ENCODE measurements at regions of chr12 and their contacts with region 1.

Region 1: GRCh38 chr12:94145191-94145983 is 3.0 kb upstream of the PLXNC1 start:
- DNase-seq: no peak
- H3K4me3 Mint-ChIP-seq: no peak overlapping the region
- H3K27ac Mint-ChIP-seq: no peak overlapping the region
- H3K4me1 Mint-ChIP-seq: peaks cover 17% of the 10 kb centered on the region
- H3K27me3 Mint-ChIP-seq: peaks cover 28% of the 10 kb centered on the region

Region 2: GRCh38 chr12:94012590-94012989 is 132.8 kb before region 1 on chr12:
- CTCF ChIA-PET with region 1: no interaction called
- POLR2A ChIA-PET with region 1: no interaction called
- DNase-seq: no peak
- H3K4me3 Mint-ChIP-seq: no peak overlapping the region
- H3K27ac Mint-ChIP-seq: no peak overlapping the region
- H3K4me1 Mint-ChIP-seq: peaks cover 15% of the 10 kb centered on the region
- H3K27me3 Mint-ChIP-seq: no peaks in the 10 kb centered on the region

Region 3: GRCh38 chr12:94133964-94134795 is 11.2 kb before region 1 on chr12:
- CTCF ChIA-PET with region 1: no interaction called
- POLR2A ChIA-PET with region 1: no interaction called
- DNase-seq: peak; percentile 57
- H3K4me3 Mint-ChIP-seq: no peak overlapping the region
- H3K27ac Mint-ChIP-seq: no peak overlapping the region
- H3K4me1 Mint-ChIP-seq: peaks cover 10% of the 10 kb centered on the region
- H3K27me3 Mint-ChIP-seq: peaks cover 11% of the 10 kb centered on the region

Region 4: DNA sequence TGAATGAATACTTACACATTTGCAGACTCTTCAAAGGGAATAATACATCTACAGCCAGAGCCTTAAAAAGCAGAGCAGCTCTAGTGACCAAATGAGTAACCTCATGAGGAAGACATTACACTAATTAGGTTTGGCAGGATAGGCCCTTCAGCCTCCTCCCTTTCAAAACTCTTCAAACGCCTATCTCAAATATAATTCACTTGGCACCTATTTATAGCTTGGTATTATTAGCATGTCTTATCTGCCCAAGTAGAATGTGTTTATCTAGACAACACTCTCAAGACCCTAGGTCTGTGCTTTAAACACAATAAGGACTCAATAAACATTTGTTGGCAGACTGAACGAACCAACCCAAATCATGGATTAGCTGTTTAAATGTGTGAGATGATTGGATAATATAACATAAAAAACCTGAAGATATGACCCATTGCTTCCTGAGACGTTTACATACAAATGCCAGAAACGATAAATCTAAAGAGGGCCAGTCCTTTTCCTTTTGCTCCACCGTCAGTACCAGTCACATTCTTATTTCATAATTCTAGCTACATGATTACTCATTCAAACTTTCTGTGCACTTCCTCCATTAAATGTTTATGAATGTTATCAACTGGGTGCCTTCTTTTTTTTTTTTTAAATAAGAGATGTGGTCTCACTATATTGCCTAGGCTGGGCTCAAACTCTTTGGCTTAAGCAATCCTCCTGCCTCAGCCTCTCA is 191.0 kb after region 1 on chr12:
- CTCF ChIA-PET with region 1: no interaction called
- POLR2A ChIA-PET with region 1: no interaction called
- DNase-seq: no peak
- H3K4me3 Mint-ChIP-seq: no peak overlapping the region
- H3K27ac Mint-ChIP-seq: no peak overlapping the region
- H3K4me1 Mint-ChIP-seq: no peaks in the 10 kb centered on the region
- H3K27me3 Mint-ChIP-seq: no peaks in the 10 kb centered on the region

Region 5: GRCh38 chr12:94531196-94531720 is 385.9 kb after region 1 on chr12:
- CTCF ChIA-PET with region 1: interaction called, 11 read pairs
- POLR2A ChIA-PET with region 1: no interaction called
- DNase-seq: no peak
- H3K4me3 Mint-ChIP-seq: no peak overlapping the region
- H3K27ac Mint-ChIP-seq: no peak overlapping the region
- H3K4me1 Mint-ChIP-seq: peaks cover 24% of the 10 kb centered on the region
- H3K27me3 Mint-ChIP-seq: no peaks in the 10 kb centered on the region

Measured in activated CD4-positive, alpha-beta T cell treated with anti-CD3 and anti-CD28 coated beads, Interleukin-2, amount 10 ng/mL, durations not matched to agents 7 days and 5 days (primary cell).